ENCODE measurements at regions of chr4 and their contacts with region 1.

Region 1: DNA sequence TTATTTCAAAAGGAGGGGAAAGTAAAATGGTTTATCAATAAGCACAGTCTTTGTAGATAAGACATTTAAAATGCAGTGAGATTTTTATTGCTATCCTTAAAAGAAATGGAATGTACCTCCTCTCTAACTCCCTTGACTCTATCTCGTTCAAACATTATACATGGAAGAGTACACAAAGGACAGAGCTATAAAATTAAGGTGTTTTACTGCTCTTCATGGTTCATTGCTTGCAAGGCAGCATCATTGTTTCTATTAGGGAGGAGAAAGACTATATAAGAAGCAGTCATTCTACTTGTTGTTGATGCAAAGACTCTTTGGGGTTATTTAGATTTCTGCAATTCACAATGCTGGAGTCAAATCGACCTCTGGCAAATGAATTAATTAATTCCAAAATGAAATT is 380.2 kb upstream of the NDST3 start:
- DNase-seq: peak in 1 of 2 experiments; percentile 10
- H3K4me3 ChIP-seq: no peak overlapping the region
- H3K4me3 Mint-ChIP-seq: no peak overlapping the region
- H3K27ac Mint-ChIP-seq: no peak overlapping the region
- H3K4me1 ChIP-seq: peaks cover 23% of the 10 kb centered on the region
- H3K4me1 Mint-ChIP-seq: peaks cover 7% of the 10 kb centered on the region
- H3K27me3 ChIP-seq: no peaks in the 10 kb centered on the region
- H3K27me3 Mint-ChIP-seq: no peaks in the 10 kb centered on the region
- CTCF ChIP-seq: no peak

Region 2: DNA sequence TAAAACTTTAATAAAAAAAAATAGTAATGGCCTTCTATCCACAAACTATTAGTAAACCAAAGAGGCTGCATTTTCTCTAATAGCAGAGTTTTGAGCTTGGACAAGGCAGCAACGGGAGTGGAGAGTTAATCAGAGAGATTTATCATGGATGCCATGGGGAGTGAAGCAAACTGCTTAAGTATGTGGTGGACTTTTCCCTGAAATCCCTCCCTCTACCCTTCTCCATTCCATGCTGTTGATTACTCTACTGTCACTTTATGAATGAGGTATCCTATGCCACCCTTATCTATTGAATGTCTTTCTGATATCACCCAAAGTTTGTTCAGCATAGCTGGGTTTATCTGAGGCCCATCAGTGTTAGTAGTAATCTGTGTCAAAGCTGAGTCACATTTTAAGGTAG is 233.1 kb before region 1 on chr4:
- CTCF ChIA-PET with region 1: no interaction called
- POLR2A ChIA-PET with region 1: no interaction called
- intact Hi-C with region 1: loop called (anchors 1 kb)
- DNase-seq: no peak
- H3K4me3 ChIP-seq: no peak overlapping the region
- H3K4me3 Mint-ChIP-seq: no peak overlapping the region
- H3K27ac Mint-ChIP-seq: no peak overlapping the region
- H3K4me1 ChIP-seq: peaks cover 17% of the 10 kb centered on the region
- H3K4me1 Mint-ChIP-seq: peaks cover 6% of the 10 kb centered on the region
- H3K27me3 ChIP-seq: no peaks in the 10 kb centered on the region
- H3K27me3 Mint-ChIP-seq: no peaks in the 10 kb centered on the region
- CTCF ChIP-seq: no peak

Region 3: DNA sequence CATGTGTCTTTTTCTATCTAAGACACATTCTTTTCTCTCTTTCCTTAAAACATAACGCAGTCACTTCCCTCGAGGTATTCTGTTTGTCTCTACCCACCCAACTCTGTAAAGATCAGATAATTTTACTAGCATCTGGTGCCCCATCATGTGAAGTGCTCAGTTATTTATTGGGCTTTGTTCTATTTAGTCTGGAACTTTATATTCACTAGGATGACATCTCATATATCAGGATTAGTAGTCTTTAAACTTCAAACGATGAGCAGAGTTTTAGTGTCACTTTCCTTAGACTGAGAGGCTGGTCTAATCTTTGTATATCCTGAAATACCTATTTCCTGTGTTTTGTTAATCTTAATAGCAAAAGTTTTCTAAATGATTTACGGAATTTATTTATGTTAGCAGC is 65.3 kb before region 1 on chr4:
- CTCF ChIA-PET with region 1: no interaction called
- POLR2A ChIA-PET with region 1: no interaction called
- intact Hi-C with region 1: loop called (anchors 1 kb)
- DNase-seq: no peak
- H3K4me3 ChIP-seq: no peak overlapping the region
- H3K4me3 Mint-ChIP-seq: no peak overlapping the region
- H3K27ac Mint-ChIP-seq: no peak overlapping the region
- H3K4me1 ChIP-seq: no peaks in the 10 kb centered on the region
- H3K4me1 Mint-ChIP-seq: no peaks in the 10 kb centered on the region
- H3K27me3 ChIP-seq: no peaks in the 10 kb centered on the region
- H3K27me3 Mint-ChIP-seq: no peaks in the 10 kb centered on the region
- CTCF ChIP-seq: no peak

Region 4: GRCh38 chr4:117596917-117597480 is 57.1 kb before region 1 on chr4:
- CTCF ChIA-PET with region 1: interaction called, 3 read pairs
- POLR2A ChIA-PET with region 1: no interaction called
- intact Hi-C with region 1: loop called (anchors 1 kb)
- DNase-seq: no peak
- H3K4me3 ChIP-seq: no peak overlapping the region
- H3K4me3 Mint-ChIP-seq: no peak overlapping the region
- H3K27ac Mint-ChIP-seq: no peak overlapping the region
- H3K4me1 ChIP-seq: 0 out of 2 replicates have a peak, but pooled peaks cover 3% of the 10 kb centered on the region
- H3K4me1 Mint-ChIP-seq: no peaks in the 10 kb centered on the region
- H3K27me3 ChIP-seq: no peaks in the 10 kb centered on the region
- H3K27me3 Mint-ChIP-seq: no peaks in the 10 kb centered on the region
- CTCF ChIP-seq: no peak

Region 5: DNA sequence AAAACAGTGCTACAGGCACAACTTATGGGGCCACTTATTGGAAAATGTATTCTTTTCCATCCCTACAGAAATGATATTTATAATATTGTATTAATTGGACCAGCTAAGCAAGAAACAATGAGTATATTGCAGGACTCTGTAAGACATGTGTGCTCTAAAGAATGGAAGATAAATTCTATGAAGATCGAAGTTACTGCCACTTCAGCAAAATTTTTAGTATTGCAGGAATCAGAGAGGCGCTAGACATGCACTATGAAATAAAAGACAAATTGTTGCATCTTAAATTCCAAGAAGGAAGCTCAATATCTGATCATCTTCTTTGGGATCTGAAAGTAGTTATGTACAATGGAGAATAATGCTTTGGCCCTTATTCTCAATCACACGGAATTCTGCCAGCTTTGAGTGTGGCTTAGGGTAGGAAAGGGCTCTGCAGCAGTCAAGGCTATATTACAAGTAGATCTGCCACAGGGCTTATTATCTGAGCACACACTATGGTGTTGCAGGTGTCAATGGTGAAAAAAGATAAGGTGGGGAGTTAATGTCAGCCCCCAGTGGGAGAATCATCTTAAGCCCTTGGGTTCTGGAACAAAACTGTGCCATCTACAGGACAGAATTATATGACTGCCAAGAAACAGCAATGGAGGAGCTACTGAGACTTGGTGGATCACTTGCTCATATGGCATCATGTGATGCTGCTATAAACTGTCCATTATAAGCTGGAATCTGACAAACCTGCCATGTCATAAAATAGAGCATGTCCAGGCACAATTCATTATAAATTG is 46.2 kb after region 1 on chr4:
- CTCF ChIA-PET with region 1: no interaction called
- POLR2A ChIA-PET with region 1: no interaction called
- intact Hi-C with region 1: no loop called
- DNase-seq: peak in 1 of 2 experiments; percentile 6
- H3K4me3 ChIP-seq: no peak overlapping the region
- H3K4me3 Mint-ChIP-seq: no peak overlapping the region
- H3K27ac Mint-ChIP-seq: no peak overlapping the region
- H3K4me1 ChIP-seq: no peaks in the 10 kb centered on the region
- H3K4me1 Mint-ChIP-seq: peaks cover 12% of the 10 kb centered on the region
- H3K27me3 ChIP-seq: no peaks in the 10 kb centered on the region; the same call in 1 of the 2 replicates
- H3K27me3 Mint-ChIP-seq: no peaks in the 10 kb centered on the region
- CTCF ChIP-seq: peak; percentile 28 to 49

Region 6: GRCh38 chr4:117847849-117848248 is 193.8 kb after region 1 on chr4:
- CTCF ChIA-PET with region 1: no interaction called
- POLR2A ChIA-PET with region 1: no interaction called
- intact Hi-C with region 1: no loop called
- DNase-seq: no peak
- H3K4me3 ChIP-seq: no peak overlapping the region
- H3K4me3 Mint-ChIP-seq: no peak overlapping the region
- H3K27ac Mint-ChIP-seq: no peak overlapping the region
- H3K4me1 ChIP-seq: no peaks in the 10 kb centered on the region
- H3K4me1 Mint-ChIP-seq: no peaks in the 10 kb centered on the region
- H3K27me3 ChIP-seq: no peaks in the 10 kb centered on the region
- H3K27me3 Mint-ChIP-seq: no peaks in the 10 kb centered on the region
- CTCF ChIP-seq: no peak

Measured in Caco-2 (cell line).